ENCODE measurements at regions of chr12 and their contacts with region 1.

Region 1: DNA sequence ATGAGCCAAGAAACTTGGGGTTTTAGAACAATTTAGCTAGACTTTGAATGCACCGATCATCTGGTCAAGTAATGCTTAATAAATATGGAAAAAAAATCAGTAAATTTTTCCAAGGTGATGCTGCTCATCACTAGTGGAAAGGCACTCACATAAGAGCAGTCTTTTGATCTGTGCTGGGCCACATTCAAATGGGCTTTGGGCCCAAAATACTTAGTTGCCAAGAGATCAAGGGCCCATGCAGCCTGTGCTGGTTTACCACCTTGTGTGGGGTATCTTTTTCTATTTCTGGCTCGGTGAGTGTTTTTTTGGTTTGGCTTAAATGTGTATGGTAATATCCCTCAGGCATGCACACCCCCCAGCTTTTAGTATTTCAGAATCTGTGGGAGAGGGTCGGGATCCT is 943.2 kb downstream of the TMTC2 start:
- DNase-seq: no peak
- H3K4me3 Mint-ChIP-seq: no peak overlapping the region
- H3K27ac Mint-ChIP-seq: no peak overlapping the region
- H3K4me1 Mint-ChIP-seq: no peaks in the 10 kb centered on the region
- H3K27me3 Mint-ChIP-seq: no peaks in the 10 kb centered on the region
- CTCF ChIP-seq: no peak

Region 2: DNA sequence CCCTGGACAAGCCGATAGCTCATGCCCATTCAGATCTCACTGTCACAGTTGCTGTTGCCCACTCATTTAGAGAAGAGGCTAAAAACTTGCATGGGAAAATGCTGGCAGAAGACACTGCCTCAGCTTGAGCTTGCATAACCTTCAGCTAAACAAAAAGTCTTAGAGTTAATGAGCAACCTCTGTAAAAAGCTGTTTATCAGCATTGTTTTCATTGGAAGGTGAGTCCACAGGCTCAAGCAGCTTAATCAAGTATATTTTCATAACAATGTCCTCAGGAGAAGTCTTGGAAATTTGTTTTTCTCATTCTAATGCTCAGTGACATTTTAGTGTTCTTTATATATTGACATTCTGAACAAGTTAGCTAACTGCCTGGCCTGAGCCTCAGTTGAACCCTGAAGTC is 70.3 kb before region 1 on chr12:
- CTCF ChIA-PET with region 1: no interaction called
- POLR2A ChIA-PET with region 1: no interaction called
- intact Hi-C with region 1: loop called (anchors 10 kb)
- DNase-seq: no peak
- H3K4me3 Mint-ChIP-seq: no peak overlapping the region
- H3K27ac Mint-ChIP-seq: no peak overlapping the region
- H3K4me1 Mint-ChIP-seq: no peaks in the 10 kb centered on the region
- H3K27me3 Mint-ChIP-seq: no peaks in the 10 kb centered on the region
- CTCF ChIP-seq: no peak

Measured in MCF 10A (cell line).